HEK293T (cell line): ENCODE measurements at regions of chr7 and their contacts with region 1.

Region 1: DNA sequence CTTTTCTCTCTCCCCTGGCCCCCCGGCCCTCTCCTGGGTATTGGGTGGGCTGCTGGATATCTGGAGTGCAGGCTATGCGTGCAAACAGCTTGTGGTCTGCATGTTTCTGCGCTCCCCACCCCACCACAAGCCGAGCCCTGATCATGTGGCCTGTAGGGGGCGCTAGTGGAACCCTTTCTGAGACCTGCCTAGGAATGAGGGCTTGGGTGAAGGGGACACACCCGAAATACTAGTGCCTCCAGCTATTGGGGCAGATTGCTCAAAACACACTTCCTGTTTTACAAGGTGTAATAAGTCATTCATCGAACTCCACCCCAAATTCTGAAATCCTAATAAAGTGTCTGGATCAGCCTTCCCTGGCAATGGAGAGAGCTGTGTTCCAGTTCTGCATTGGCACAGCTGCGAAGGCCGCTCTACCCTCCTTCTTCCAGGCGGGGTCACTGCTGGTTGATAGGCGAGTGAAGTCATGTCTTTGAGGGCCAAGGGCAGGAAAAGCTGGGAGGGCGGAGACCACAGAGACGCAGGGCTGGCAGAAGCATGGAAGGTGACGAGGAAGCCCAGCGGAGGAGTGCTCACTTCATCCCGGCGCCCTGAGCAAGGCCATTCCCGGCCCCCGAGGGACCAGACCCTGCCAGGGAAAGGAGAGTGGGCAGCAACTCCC is 19.8 kb upstream of the PRRT4 start:
- DNase-seq: peak; percentile 81

Region 2: DNA sequence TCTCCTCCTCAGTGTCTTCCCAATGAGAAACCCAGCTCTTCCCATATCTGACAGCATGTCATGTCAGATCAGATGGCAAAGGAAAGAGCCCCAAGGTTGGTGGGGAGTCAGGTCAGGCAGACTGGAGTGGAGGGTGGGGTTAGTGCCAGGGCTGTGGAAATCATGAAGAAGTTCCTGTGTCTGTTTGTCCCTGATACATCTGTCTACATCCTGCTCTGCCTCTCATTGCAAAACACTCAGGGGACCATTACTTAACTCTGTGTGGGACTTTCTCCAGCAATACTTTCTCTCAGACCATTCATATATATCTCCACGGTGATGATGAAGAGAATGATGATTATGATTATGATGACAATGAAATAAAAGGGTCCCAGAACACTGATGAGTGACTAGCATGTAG is 23.1 kb before region 1 on chr7:
- CTCF ChIA-PET with region 1: interaction called, 10 read pairs
- POLR2A ChIA-PET with region 1: interaction called, 3 read pairs
- DNase-seq: no peak

Region 3: GRCh38 chr7:128366300-128366699 is 15.0 kb before region 1 on chr7:
- CTCF ChIA-PET with region 1: interaction called, 12 read pairs
- POLR2A ChIA-PET with region 1: no interaction called
- DNase-seq: no peak